ENCODE measurements at regions of chr6 and their contacts with region 1.

Region 1: GRCh38 chr6:131199568-131200272 is 64.5 kb downstream of the AKAP7 start:
- DNase-seq: peak; percentile 43
- H3K4me3 ChIP-seq: no peak overlapping the region
- H3K27ac ChIP-seq: peak overlapping the region in 3 of 4 donors; percentile 23 to 53 (median 31)
- H3K4me1 ChIP-seq: no peaks in the 10 kb centered on the region
- H3K27me3 ChIP-seq: no peaks in the 10 kb centered on the region
- CTCF ChIP-seq: peak in 4 of 5 experiments; percentile 33 to 76 (median 60)
- EP300 ChIP-seq: no peak
- POLR2A ChIP-seq: peak; percentile 11

Region 2: DNA sequence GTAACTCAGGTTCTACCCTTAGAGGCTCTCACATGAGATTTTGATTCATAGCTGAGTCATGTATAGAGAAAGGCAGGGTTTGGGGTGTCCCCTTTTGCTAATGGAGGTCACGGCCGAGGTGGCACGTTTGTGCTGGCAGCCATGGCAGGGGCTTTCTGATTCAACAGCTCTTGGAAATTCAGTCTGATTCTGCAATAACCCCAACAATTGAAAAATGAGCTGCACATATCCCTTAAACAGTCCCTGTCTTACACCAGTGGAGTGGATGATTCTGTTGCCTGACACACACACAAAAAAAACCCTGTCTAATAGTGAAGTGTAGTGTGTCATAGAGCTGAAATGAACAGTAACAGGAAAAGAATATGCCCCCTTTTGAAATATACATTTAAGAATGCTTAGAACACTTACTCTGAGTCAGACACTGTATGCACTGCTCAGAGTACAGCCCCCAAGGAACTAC is 332.9 kb after region 1 on chr6:
- in situ Hi-C with region 1: loop called in 1 of 4 experiments (anchors 25 kb)
- intact Hi-C with region 1: no loop called
- DNase-seq: no peak
- H3K4me3 ChIP-seq: no peak overlapping the region
- H3K27ac ChIP-seq: no peak overlapping the region
- H3K4me1 ChIP-seq: peaks cover 0 to 7% (median 0%) of the 10 kb centered on the region in 4 donors
- H3K27me3 ChIP-seq: no peaks in the 10 kb centered on the region
- CTCF ChIP-seq: no peak
- EP300 ChIP-seq: no peak
- POLR2A ChIP-seq: no peak